Activated naive CD4-positive, alpha-beta T cell treated with anti-CD3 and anti-CD28 coated beads for 36 hours (primary cell): ENCODE measurements at regions of chr6 and their contacts with region 1.

Region 1: DNA sequence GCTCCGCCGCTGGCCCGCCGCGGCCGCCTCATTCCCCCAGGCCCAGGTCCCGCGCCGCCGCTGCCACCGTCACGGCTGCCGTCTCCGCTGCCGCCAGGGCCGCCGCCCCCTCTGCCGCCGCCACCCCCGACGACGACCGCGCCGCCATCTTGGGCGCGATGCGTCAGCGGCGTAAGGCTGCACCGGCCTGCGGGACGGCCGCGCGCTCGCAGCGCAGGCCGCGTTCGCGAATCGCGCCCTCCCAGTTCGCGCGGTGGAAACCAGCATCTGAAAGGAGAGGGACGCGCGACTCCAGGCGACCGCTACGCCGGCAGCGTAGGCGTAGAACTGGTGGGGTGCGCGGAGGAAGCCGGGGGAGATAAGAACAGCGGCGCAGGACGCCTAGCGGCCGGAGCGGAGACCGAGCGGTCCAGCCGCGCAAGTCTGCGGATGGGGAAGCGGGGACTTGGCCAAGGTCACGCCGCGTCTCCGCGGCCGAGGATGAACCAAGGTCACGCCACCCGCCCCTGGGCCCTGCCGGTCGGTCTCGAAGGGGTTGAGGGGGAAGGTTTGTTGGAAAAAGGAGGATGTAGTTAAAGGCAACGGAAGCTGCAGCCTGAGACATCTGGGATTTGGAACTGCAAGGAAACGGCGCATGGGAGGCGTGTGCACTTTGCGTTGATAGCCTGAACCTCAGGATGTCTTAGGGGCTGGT is at the start of gene NUDT3:
- DNase-seq: peak; percentile 92
- H3K4me3 Mint-ChIP-seq: peak within 1 kb of the TSS; percentile 66
- H3K27ac Mint-ChIP-seq: peak within 1 kb of the TSS; percentile 88
- H3K4me1 Mint-ChIP-seq: peaks cover 27% of the 10 kb centered on the region
- H3K27me3 Mint-ChIP-seq: no peaks in the 10 kb centered on the region
- total RNA-seq, gene NUDT3: 14.0 to 14.3 TPM

Region 2: DNA sequence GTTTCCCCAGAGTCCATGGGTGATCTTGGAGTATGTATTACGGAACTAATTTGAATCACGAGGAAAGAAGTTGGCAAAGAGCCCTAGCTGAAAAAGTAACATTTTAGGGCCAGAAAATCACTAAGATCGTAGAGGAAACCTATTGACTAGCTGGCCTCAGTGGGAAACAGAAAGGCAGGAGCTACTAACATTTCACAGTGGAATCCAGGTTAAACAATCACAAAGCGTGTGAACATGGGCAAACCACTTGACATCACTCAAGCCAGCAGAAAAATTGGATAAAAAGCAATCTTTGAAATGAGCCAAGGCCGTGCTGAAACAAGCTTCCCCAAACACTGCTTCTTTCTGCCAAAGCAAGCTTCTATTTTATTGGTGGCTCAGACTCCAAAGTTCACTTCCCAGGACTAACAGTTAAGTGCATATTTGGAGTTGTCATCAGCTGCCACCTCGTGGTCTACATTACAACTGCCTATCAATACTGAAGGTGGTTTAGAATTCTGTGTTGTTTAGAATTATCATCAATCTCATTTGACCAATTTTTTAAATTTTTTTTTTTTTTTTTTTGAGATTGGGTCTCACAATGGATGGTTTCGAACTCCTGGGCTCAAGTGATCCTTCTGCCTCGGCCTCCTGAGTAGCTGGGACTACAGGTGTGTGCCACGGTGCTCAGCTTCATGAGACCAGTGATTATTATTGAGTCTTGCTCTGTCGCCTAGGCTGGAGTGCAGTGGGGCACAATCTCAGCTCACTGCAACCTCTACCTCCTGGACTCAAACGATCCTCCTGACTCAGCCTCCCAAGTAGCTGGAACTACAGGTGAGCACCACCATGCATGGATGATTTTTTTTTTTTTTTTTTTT is 22.6 kb after region 1 on chr6:
- CTCF ChIA-PET with region 1: interaction called, 12 read pairs
- intact Hi-C with region 1: no loop called
- DNase-seq: peak; percentile 46
- H3K4me3 Mint-ChIP-seq: no peak overlapping the region
- H3K27ac Mint-ChIP-seq: no peak overlapping the region
- H3K4me1 Mint-ChIP-seq: peaks cover 12% of the 10 kb centered on the region
- H3K27me3 Mint-ChIP-seq: no peaks in the 10 kb centered on the region

Region 3: DNA sequence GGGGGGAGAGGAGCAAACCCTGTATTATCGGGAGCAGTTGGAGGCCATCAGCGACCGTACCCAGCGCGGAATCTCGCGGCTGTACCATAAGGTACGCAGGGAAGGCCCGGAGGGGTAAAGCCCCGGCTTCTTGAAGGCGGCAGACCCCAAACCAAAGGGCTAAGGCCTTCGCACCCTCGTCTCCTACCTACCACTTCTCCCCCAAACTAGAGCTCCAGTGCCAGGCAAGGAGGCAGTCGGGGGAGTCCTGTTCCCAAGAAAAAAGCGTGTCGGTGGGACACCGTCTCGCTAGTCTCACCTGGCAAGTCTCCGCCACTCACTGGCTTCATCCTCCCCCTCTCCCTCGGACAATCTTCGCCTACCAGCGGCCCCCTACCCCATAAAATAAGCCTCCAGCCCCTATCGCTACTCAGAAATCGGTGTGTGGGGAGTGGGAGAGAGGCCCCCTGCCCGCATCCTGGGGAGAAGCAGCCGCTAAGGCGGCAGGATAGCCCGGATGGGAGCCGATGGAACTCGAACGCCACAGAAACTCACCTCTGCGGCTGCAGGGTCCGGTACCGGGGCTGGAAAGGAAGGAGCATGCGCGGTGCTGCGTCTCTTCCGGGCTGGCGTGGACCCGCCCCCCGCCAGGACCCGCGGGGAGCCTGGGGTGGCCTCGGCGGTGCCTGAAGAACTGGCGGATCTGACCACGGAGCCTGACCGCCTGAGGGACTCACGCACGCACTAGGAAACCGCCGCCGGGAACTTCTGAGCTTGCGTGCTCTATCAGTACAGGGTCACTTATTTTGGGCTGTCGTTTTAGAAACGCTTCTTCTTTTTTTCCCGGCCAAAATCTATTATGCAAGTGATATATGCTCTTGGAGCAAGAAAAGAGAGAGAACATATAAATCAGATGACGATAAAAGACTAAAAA is 33.1 kb after region 1 on chr6 and contains the start of gene RPS10:
- CTCF ChIA-PET with region 1: interaction called, 4 read pairs
- intact Hi-C with region 1: loop called (anchors 1 kb)
- DNase-seq: peak; percentile 93
- H3K4me3 Mint-ChIP-seq: peak within 1 kb of the TSS; percentile 98
- H3K27ac Mint-ChIP-seq: peak within 1 kb of the TSS; percentile 98
- H3K4me1 Mint-ChIP-seq: peaks cover 38% of the 10 kb centered on the region
- H3K27me3 Mint-ChIP-seq: no peaks in the 10 kb centered on the region
- total RNA-seq, gene RPS10: 2,718 to 2,727 TPM